ENCODE measurements at regions of chr3 and their contacts with region 1.

Region 1: GRCh38 chr3:40505599-40506462 is at the start of gene ZNF620:
- DNase-seq: no peak
- H3K4me3 ChIP-seq: peak within 1 kb of the TSS; percentile 44 to 57
- H3K27ac ChIP-seq: peak within 1 kb of the TSS; percentile 46
- H3K4me1 ChIP-seq: peaks cover 20% of the 10 kb centered on the region
- H3K27me3 ChIP-seq: no peaks in the 10 kb centered on the region
- CTCF ChIP-seq: no peak
- POLR2A ChIP-seq: no peak
- total RNA-seq, gene ZNF620: 1.5 TPM

Region 2: DNA sequence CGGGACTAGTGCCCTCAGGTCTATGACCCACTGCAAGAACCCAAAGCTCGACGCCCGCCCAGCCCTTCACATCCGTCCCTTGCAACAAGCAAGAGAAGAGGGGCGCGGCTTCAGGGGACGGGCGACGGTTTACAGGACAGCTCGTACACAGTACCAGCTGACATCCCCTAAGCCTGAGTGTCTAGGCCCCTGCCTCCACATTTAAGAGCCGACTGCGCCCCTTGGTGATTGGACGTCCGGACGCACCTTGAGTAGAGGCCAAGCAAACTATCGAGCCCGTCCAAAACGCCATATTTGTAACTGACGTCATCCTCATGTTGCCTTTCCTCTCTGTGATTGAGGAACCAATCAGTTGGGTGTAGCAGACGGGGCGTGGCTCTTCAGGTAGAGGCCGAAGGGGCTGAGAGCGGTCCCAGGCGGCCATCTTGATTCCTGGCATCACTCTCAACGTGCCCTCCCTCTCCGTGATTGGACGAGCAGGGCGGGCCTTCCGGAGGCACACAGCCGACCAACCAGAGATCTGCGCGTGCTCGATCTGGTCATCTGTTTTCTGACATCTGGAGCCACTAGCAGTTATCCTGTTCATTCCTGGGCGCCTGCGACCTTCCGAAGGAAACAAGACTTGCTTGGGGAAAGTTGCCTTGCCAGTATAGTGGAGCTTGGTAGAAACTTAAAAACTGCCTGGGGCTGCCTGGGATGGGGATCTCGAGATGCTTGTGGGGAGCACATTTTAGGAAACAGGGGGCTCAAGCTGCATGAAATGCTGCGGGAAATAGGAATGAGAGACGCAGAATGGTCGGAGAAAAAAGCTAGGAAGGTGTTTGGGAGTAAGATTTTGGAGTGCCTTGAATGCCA is 52.7 kb before region 1 on chr3:
- intact Hi-C with region 1: loop called (anchors 10 kb)
- DNase-seq: peak; percentile 98 to 99
- H3K4me3 ChIP-seq: peak overlapping the region; percentile 68 to 84
- H3K27ac ChIP-seq: peak overlapping the region; percentile 96
- H3K4me1 ChIP-seq: peaks cover 32% of the 10 kb centered on the region
- H3K27me3 ChIP-seq: no peaks in the 10 kb centered on the region
- CTCF ChIP-seq: no peak
- POLR2A ChIP-seq: peak in 1 of 2 donors; percentile 18

Region 3: GRCh38 chr3:41178576-41178975 is 672.7 kb after region 1 on chr3:
- intact Hi-C with region 1: no loop called
- DNase-seq: no peak
- H3K4me3 ChIP-seq: no peak overlapping the region
- H3K27ac ChIP-seq: no peak overlapping the region
- H3K4me1 ChIP-seq: peaks cover 17% of the 10 kb centered on the region
- H3K27me3 ChIP-seq: no peaks in the 10 kb centered on the region
- CTCF ChIP-seq: no peak
- POLR2A ChIP-seq: no peak

Measured in vagina (tissue), 2 donors.